ENCODE measurements at regions of chr9 and their contacts with region 1.

Region 1: DNA sequence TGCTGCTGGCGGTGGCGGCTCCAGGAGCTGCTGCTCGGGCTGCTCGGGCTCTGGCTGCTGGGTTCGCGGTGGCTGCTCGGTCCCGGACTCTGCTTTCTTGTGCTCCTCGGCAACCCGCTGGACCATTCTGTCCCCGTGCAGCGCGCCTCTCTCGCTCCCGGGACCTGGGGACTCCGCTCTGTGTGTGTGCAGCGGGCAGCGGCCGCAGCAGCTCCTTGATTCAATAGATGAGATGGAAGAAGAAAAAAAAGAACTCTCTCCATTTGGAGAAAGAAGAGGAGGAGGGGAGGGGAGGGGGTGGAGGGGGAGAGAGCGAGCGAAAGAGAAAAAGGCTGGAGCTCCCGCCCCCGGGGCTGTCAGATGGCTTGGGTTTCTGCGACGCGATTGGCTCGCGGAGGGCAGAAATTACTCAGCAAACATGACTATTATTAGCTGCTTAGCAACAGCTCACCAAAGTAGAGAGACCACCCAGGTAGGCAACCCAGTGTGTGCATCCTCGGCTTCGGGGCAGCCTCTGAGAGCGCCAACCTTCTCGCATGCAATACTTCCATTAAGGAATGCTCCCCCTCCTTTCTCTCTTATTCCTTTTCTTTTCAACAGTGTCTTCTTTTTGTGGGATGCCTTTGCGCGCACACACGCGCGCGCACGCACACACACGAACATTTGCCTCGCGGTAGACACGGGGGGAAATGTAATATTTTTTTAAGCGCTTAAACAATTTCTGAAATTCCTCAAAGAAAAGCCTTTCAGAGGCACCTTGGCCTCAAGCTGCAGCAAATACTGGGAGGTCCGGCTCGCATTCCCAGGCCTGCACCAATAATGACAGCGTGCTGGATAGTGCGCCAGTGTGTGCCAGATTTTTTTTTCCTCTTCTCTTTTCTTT is 7.6 kb downstream of the PTCH1 start:
- DNase-seq: no peak

Region 2: DNA sequence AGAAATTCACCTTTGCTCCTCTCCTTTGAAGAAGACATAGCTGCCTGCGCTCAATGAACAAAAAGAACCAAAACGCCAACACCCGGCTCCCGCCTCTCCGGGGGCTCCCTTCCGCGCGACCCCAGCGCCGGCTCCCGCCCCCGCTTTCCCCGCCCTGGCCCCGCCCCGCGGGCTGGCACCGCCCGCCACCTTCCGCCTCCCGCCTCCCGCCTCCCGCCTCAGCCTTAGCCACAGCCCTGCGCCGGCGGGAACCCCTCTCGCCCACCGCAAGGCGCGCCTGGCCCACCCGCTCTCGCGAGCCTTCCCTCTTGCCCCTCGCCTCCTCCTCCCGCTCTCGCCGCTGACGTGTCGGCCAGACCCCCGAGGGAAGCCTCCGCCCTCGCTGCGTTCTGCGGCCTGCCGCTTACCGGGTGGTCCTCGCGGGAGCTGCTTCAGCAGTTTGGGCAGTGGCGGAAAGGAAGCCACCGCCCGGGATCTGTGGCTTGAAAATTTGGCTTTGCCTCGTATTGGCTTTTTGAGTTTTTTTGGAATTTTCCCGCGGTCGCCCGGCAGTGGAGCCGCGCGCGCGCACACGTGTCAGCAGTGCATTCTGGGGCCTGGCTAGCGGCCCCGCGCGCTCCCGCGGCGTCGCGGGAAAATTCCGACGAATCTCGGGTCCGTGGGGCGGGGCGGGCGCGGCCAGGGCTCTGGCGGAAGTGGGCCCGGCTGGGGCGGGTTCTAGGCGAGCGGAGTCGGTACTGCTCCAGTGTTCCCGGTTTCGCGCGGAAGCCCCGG is 191.9 kb before region 1 on chr9 and contains the start of gene FANCC:
- intact Hi-C with region 1: loop called (anchors 1 kb)
- DNase-seq: peak; percentile 94
- total RNA-seq, gene FANCC: 4.3 TPM

Region 3: DNA sequence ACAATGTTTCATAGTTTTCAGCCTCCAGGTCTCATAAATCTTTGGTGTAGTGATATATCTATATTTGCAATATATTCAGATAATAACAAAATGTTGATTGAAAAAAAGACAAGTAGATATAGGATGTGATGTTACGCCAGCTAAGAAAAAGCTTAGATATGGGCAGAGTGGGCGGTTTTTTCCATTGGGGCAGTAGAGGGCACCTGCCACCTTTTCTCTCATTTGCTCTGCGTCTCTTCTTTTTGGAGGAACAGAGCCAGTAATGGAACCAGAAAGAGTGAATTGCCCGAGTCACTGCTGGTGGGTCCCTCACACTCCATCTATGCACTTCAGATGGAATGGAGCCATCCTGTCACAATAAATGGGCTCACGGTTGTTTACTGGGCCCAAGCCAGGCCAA is 129.6 kb before region 1 on chr9:
- intact Hi-C with region 1: no loop called
- DNase-seq: no peak

Region 4: GRCh38 chr9:95462249-95463147 is 46.7 kb before region 1 on chr9:
- intact Hi-C with region 1: loop called (anchors 5 kb)
- DNase-seq: no peak

Region 5: DNA sequence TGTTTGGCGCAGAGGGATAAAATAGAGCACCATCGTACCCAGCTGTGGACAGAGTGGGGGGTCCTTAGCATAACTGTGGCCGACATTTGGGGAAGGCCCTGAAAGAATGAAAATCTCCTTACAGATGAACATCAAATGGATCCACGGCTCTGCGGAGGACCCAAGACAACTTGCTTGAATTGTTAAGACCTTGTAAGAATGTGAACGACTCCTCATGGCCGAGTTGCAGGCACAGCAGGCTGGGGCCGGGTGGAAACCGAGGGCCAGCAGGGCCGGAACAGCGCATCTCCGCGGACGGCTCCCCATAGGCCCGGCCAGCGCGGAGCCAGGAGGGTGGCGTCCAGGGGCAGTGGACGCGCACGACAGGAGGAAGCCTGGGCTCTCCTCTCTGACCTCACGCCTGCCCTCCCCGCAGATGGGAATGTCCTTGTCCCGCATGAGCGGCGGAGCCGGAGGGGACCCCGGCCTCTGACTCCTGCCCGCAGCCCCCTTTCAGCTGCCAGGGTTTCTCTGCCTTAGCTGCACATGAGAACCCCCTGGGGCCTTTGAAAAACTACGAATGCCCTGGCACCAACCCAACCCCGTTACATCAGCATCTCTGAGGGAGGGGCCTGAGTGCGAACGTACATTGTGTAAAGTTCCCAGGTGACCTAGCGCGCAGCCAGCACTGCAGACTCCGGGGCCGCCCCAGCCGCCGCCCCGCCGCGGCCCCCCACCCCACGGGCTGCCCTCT is 43.8 kb after region 1 on chr9:
- intact Hi-C with region 1: no loop called
- DNase-seq: no peak

Region 6: GRCh38 chr9:95875305-95876137 is 366.3 kb after region 1 on chr9 and contains the start of gene ERCC6L2:
- intact Hi-C with region 1: loop called (anchors 2 kb)
- DNase-seq: peak; percentile 96
- total RNA-seq, gene ERCC6L2: 30.5 TPM

Measured in cardiac septum (tissue), 1 donor.